CD8-positive, alpha-beta T cell (primary cell): ENCODE measurements at regions of chr1 and their contacts with region 1.

Region 1: DNA sequence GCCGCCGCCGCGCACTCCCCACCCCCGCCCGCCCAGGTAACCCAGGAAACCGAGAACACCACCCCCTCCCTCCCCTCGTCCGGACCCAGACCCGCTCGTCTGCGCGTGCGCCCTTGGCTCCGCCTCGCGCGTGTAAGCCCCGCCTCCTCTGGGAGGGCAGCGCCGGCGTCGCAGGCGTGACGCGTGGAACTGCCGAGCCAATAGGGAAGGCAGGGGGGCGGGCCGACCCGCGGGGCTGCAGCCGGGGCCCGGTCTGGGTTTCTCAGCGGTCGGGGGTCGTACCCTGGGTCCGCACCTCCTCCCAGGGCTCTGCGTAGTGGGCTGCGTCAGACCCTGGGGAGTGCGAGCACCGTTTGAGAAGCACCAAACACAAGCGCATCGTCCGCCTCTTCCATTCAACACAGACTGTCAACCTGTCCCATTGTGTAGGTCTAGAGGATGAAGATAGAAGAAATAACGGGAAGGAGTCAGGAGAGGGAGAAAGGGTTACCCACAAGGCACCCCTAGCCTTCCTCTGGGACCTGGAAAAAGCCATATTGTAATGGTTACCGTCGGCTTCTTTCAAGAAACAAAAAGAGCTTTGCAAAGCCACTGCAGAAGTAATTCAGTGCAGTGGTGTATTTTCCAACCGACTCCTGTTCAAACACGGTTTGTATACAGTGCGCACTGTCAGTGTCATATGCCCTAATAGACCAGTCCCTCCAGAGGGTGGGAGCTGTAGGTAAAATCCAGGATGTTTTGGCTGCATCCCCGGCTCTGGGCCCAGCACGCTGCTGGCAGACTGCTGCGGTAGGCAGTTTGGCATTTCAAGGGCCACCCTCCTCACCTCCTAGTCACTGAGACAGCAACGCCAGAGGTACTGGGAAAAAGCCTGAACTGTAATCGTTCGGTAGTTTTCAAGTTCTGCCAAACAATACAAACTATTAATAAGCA is 473 bp upstream of the LYST start:
- DNase-seq: peak; percentile 96 to 99 (median 98)
- ATAC-seq: peak; percentile 75
- H3K4me3 ChIP-seq: peak overlapping the region; percentile 74 to 89
- H3K4me3 Mint-ChIP-seq: peak overlapping the region; percentile 95
- H3K27ac ChIP-seq: peak overlapping the region; percentile 95 to 99
- H3K27ac Mint-ChIP-seq: peak overlapping the region; percentile 99
- H3K4me1 ChIP-seq: peaks cover 27% of the 10 kb centered on the region
- H3K4me1 Mint-ChIP-seq: peaks cover 52% of the 10 kb centered on the region
- H3K27me3 ChIP-seq: no peaks in the 10 kb centered on the region
- H3K27me3 Mint-ChIP-seq: no peaks in the 10 kb centered on the region
- CTCF ChIP-seq: no peak

Region 2: GRCh38 chr1:234772345-234773147 is 1094.6 kb before region 1 on chr1:
- CTCF ChIA-PET with region 1: no interaction called
- POLR2A ChIA-PET with region 1: no interaction called
- intact Hi-C with region 1: loop called in 1 of 2 experiments (anchors 10 kb)
- DNase-seq: peak; percentile 59 to 95 (median 85)
- ATAC-seq: peak; percentile 80
- H3K4me3 ChIP-seq: peak overlapping the region in 1 of 2 experiments; percentile 23
- H3K4me3 Mint-ChIP-seq: peak overlapping the region; percentile 66
- H3K27ac ChIP-seq: peak overlapping the region; percentile 39 to 73
- H3K27ac Mint-ChIP-seq: peak overlapping the region; percentile 94
- H3K4me1 ChIP-seq: peaks cover 58% of the 10 kb centered on the region
- H3K4me1 Mint-ChIP-seq: peaks cover 54% of the 10 kb centered on the region
- H3K27me3 ChIP-seq: no peaks in the 10 kb centered on the region
- H3K27me3 Mint-ChIP-seq: no peaks in the 10 kb centered on the region
- CTCF ChIP-seq: no peak

Region 3: GRCh38 chr1:235617808-235618207 is 249.4 kb before region 1 on chr1:
- CTCF ChIA-PET with region 1: no interaction called
- POLR2A ChIA-PET with region 1: no interaction called
- intact Hi-C with region 1: no loop called
- DNase-seq: no peak
- ATAC-seq: no peak
- H3K4me3 ChIP-seq: no peak overlapping the region
- H3K4me3 Mint-ChIP-seq: no peak overlapping the region
- H3K27ac ChIP-seq: no peak overlapping the region
- H3K27ac Mint-ChIP-seq: no peak overlapping the region
- H3K4me1 ChIP-seq: no peaks in the 10 kb centered on the region
- H3K4me1 Mint-ChIP-seq: no peaks in the 10 kb centered on the region
- H3K27me3 ChIP-seq: no peaks in the 10 kb centered on the region
- H3K27me3 Mint-ChIP-seq: peaks cover 2% of the 10 kb centered on the region
- CTCF ChIP-seq: no peak

Region 4: DNA sequence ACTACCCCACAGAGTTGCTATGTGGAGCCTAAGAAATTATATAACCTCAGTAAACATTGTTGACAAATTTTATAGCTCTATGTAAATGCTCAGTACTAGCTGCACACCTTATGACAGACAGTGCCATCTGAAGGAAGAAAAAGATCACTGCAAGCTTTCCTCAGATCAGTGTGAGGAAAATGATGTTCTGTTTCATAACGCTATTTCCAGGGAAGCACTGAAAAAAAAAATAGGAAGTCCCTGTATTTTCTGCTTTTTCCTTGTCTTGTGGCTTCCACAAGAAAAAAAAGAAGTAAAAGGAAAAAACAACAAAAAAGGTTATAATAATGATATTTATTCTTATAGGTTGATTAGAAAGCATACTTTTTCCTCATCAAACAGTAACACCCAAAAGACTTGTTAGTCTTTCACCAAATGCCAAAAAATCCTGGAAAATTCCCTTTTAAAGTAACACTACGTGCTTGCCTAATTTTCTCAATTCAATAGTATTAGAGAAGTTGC is 23.7 kb before region 1 on chr1:
- CTCF ChIA-PET with region 1: interaction called, 4 read pairs
- POLR2A ChIA-PET with region 1: interaction called, 3 read pairs
- intact Hi-C with region 1: loop called (anchors 2 kb)
- DNase-seq: peak in 2 of 9 experiments; percentile 44 to 64
- ATAC-seq: peak; percentile 81
- H3K4me3 ChIP-seq: no peak overlapping the region
- H3K4me3 Mint-ChIP-seq: no peak overlapping the region
- H3K27ac ChIP-seq: no peak overlapping the region
- H3K27ac Mint-ChIP-seq: no peak overlapping the region
- H3K4me1 ChIP-seq: peaks cover 14% of the 10 kb centered on the region
- H3K4me1 Mint-ChIP-seq: peaks cover 76% of the 10 kb centered on the region
- H3K27me3 ChIP-seq: no peaks in the 10 kb centered on the region
- H3K27me3 Mint-ChIP-seq: no peaks in the 10 kb centered on the region
- CTCF ChIP-seq: peak; percentile 65

Region 5: GRCh38 chr1:235917267-235917811 is 50.2 kb after region 1 on chr1:
- CTCF ChIA-PET with region 1: no interaction called
- POLR2A ChIA-PET with region 1: interaction called, 4 read pairs
- intact Hi-C with region 1: loop called (anchors 2 to 5 kb)
- DNase-seq: peak; percentile 8 to 87 (median 59)
- ATAC-seq: peak; percentile 94
- H3K4me3 ChIP-seq: no peak overlapping the region
- H3K4me3 Mint-ChIP-seq: no peak overlapping the region
- H3K27ac ChIP-seq: no peak overlapping the region
- H3K27ac Mint-ChIP-seq: peak overlapping the region; percentile 84
- H3K4me1 ChIP-seq: peaks cover 7% of the 10 kb centered on the region
- H3K4me1 Mint-ChIP-seq: peaks cover 11% of the 10 kb centered on the region
- H3K27me3 ChIP-seq: no peaks in the 10 kb centered on the region
- H3K27me3 Mint-ChIP-seq: no peaks in the 10 kb centered on the region
- CTCF ChIP-seq: no peak

Region 6: DNA sequence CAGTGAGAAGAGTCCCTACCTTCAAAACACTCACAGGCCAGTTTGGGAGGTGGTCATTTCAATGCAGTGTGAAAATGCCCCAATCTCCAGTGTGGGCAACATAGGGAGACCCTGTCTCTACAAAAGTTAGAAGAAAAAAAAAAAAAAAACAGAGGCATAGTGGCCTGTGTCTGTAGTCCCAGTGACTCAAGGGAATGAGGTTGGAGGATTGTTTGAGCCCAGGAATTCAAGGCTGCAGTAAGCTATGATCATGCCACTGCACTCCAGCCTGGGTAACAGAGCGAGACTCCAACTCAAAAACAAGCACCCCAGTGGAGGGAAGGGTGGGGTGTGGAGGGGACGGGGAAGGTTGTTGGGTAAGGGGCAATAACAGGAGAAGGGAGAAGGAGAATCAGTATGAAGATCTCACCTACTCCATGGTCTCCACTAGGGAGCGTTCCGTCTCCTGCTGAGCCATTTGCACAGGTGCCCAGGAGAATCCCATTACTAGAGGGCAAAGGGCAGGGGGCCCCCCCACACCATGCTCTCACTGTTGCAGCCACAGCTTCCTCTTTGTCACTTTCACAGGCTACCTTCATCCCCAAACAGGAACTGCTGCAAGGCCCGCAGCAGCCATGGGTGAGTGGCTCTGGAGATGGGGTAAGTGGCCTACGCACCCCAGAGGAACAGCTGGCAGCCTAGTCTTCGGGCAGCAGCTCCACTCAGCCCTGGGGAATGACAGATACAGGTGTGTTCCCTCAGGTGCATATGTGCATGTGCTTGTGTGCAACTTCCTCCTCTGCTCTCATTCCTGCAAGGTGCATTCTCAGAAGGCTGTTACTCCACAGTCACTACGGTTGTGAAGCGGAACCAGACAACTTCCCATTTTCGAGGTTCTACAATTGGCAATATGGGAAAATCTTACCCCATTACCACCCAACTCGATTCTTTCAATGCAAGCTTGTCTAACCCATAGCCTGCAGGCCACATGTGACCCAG is 87.4 kb after region 1 on chr1:
- CTCF ChIA-PET with region 1: interaction called, 3 read pairs
- POLR2A ChIA-PET with region 1: interaction called, 5 read pairs
- intact Hi-C with region 1: loop called in 1 of 2 experiments (anchors 5 kb)
- DNase-seq: peak; percentile 5 to 79 (median 61)
- ATAC-seq: peak; percentile 85
- H3K4me3 ChIP-seq: no peak overlapping the region
- H3K4me3 Mint-ChIP-seq: peak overlapping the region; percentile 62
- H3K27ac ChIP-seq: peak overlapping the region in 1 of 2 experiments; percentile 14
- H3K27ac Mint-ChIP-seq: peak overlapping the region; percentile 78
- H3K4me1 ChIP-seq: peaks cover 31% of the 10 kb centered on the region
- H3K4me1 Mint-ChIP-seq: peaks cover 39% of the 10 kb centered on the region
- H3K27me3 ChIP-seq: no peaks in the 10 kb centered on the region
- H3K27me3 Mint-ChIP-seq: no peaks in the 10 kb centered on the region
- CTCF ChIP-seq: no peak

Region 7: DNA sequence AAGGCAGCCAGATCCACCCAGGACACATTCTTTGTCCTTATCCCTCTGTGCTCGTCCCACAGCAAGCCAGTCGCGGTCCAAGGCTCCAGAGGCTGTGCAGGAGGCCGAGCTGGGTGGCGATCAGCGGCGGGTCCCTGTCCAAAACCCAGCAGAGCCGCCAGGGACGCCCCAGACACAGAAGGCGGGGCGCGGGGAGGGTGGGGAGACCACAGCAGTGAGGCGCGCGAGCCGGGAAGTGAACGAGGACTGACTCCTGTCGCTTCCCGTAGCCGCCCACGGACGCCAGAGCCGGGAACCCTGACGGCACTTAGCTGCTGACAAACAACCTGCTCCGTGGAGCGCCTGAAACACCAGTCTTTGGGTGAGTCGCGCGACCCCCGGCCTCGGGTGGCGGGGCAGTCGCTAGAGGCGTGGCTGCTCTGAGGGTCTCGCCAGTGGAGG is 656.5 kb after region 1 on chr1 and contains the start of gene LGALS8:
- CTCF ChIA-PET with region 1: no interaction called
- POLR2A ChIA-PET with region 1: no interaction called
- intact Hi-C with region 1: loop called (anchors 5 kb)
- DNase-seq: peak; percentile 65 to 93 (median 88)
- ATAC-seq: peak; percentile 80
- H3K4me3 ChIP-seq: peak within 1 kb of the TSS; percentile 78 to 95
- H3K4me3 Mint-ChIP-seq: peak within 1 kb of the TSS; percentile 92
- H3K27ac ChIP-seq: peak within 1 kb of the TSS; percentile 84 to 92
- H3K27ac Mint-ChIP-seq: peak within 1 kb of the TSS; percentile 93
- H3K4me1 ChIP-seq: peaks cover 11% of the 10 kb centered on the region
- H3K4me1 Mint-ChIP-seq: peaks cover 32% of the 10 kb centered on the region
- H3K27me3 ChIP-seq: no peaks in the 10 kb centered on the region
- H3K27me3 Mint-ChIP-seq: peaks cover 3% of the 10 kb centered on the region
- CTCF ChIP-seq: no peak
- total RNA-seq, gene LGALS8: 118 to 125 TPM